Activated CD4-positive, alpha-beta T cell treated with anti-CD3 and anti-CD28 coated beads, Interleukin-2, amount 10 ng/mL, durations not matched to agents 7 days and 5 days (primary cell): ENCODE measurements at regions of chr1 and their contacts with region 1.

Region 1: GRCh38 chr1:23634842-23635651 is 56.6 kb upstream of the RPL11 start:
- DNase-seq: peak; percentile 72
- H3K4me3 Mint-ChIP-seq: peak overlapping the region; percentile 55
- H3K27ac Mint-ChIP-seq: peak overlapping the region; percentile 83
- H3K4me1 Mint-ChIP-seq: peaks cover 28% of the 10 kb centered on the region
- H3K27me3 Mint-ChIP-seq: no peaks in the 10 kb centered on the region

Region 2: DNA sequence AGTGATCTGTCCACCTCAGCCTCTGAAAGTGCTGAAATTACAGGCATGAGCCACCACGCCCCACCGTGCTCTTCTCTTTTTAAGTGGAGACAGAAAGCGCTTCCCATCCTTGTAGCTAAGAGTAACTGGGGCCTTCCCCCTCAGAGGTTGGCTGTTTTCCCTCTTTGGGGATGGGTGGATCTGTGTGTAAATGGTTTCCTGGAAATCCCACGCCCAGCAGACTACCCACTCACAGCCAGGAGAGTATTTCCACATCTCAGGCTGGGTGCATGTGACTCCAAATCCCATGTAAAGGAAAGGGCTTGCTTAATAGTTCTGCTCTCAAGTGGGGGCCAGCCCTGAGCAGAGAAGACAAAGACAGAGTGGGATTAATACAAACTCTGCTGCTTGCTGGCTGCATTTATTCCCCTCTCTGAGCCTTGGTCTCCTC is 190.9 kb before region 1 on chr1:
- CTCF ChIA-PET with region 1: no interaction called
- POLR2A ChIA-PET with region 1: no interaction called
- DNase-seq: no peak
- H3K4me3 Mint-ChIP-seq: no peak overlapping the region
- H3K27ac Mint-ChIP-seq: no peak overlapping the region
- H3K4me1 Mint-ChIP-seq: peaks cover 3% of the 10 kb centered on the region
- H3K27me3 Mint-ChIP-seq: peaks cover 3% of the 10 kb centered on the region

Region 3: GRCh38 chr1:23496490-23497181 is 138.4 kb before region 1 on chr1:
- CTCF ChIA-PET with region 1: interaction called, 25 read pairs
- POLR2A ChIA-PET with region 1: no interaction called
- DNase-seq: no peak
- H3K4me3 Mint-ChIP-seq: no peak overlapping the region
- H3K27ac Mint-ChIP-seq: no peak overlapping the region
- H3K4me1 Mint-ChIP-seq: peaks cover 8% of the 10 kb centered on the region
- H3K27me3 Mint-ChIP-seq: peaks cover 3% of the 10 kb centered on the region

Region 4: GRCh38 chr1:23530747-23531561 is 104.1 kb before region 1 on chr1 and contains the start of gene E2F2:
- CTCF ChIA-PET with region 1: interaction called, 19 read pairs
- POLR2A ChIA-PET with region 1: no interaction called
- DNase-seq: peak; percentile 88
- H3K4me3 Mint-ChIP-seq: peak within 1 kb of the TSS; percentile 98
- H3K27ac Mint-ChIP-seq: peak within 1 kb of the TSS; percentile 95
- H3K4me1 Mint-ChIP-seq: peaks cover 76% of the 10 kb centered on the region
- H3K27me3 Mint-ChIP-seq: no peaks in the 10 kb centered on the region
- total RNA-seq, gene E2F2: 107 to 112 TPM

Region 5: DNA sequence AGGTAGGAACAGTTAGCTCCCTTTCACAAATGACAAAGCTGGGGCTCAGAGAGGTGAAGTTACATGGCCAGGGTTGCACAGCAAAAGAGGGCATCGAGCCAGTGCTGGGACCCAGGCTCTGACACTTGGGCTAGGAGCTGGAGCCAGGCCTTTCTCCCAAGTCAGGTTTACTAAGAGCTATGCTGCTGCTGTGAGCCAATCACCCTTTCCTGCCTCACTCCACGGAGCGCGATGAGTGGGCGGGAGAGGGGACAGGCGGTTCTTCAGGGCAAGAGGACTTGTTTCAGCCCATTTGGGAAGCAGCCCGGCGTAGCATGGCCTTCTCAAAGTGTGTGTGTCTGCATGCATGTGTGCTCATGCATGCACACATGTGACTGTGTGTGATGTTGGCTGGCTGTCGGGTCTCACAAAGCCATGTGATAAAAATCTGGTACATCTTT is 86.3 kb before region 1 on chr1:
- CTCF ChIA-PET with region 1: interaction called, 79 read pairs
- POLR2A ChIA-PET with region 1: interaction called, 5 read pairs
- DNase-seq: no peak
- H3K4me3 Mint-ChIP-seq: no peak overlapping the region
- H3K27ac Mint-ChIP-seq: no peak overlapping the region
- H3K4me1 Mint-ChIP-seq: peaks cover 11% of the 10 kb centered on the region
- H3K27me3 Mint-ChIP-seq: no peaks in the 10 kb centered on the region

Region 6: GRCh38 chr1:23598424-23598823 is 36.6 kb before region 1 on chr1:
- CTCF ChIA-PET with region 1: interaction called, 10 read pairs
- POLR2A ChIA-PET with region 1: no interaction called
- DNase-seq: no peak
- H3K4me3 Mint-ChIP-seq: no peak overlapping the region
- H3K27ac Mint-ChIP-seq: peak overlapping the region; percentile 86
- H3K4me1 Mint-ChIP-seq: peaks cover 93% of the 10 kb centered on the region
- H3K27me3 Mint-ChIP-seq: no peaks in the 10 kb centered on the region

Region 7: GRCh38 chr1:23619299-23620188 is 15.5 kb before region 1 on chr1:
- CTCF ChIA-PET with region 1: interaction called, 50 read pairs
- POLR2A ChIA-PET with region 1: no interaction called
- DNase-seq: peak; percentile 76
- H3K4me3 Mint-ChIP-seq: peak overlapping the region; percentile 68
- H3K27ac Mint-ChIP-seq: peak overlapping the region; percentile 94
- H3K4me1 Mint-ChIP-seq: peaks cover 88% of the 10 kb centered on the region
- H3K27me3 Mint-ChIP-seq: no peaks in the 10 kb centered on the region

Region 8: GRCh38 chr1:23790696-23791515 is 155.9 kb after region 1 on chr1 and contains the start of gene LYPLA2:
- CTCF ChIA-PET with region 1: no interaction called
- POLR2A ChIA-PET with region 1: no interaction called
- DNase-seq: peak; percentile 91
- H3K4me3 Mint-ChIP-seq: peak within 1 kb of the TSS; percentile 99
- H3K27ac Mint-ChIP-seq: peak within 1 kb of the TSS; percentile 98
- H3K4me1 Mint-ChIP-seq: peaks cover 29% of the 10 kb centered on the region
- H3K27me3 Mint-ChIP-seq: no peaks in the 10 kb centered on the region
- total RNA-seq, gene LYPLA2: 73.2 to 75.9 TPM